Activated naive CD4-positive, alpha-beta T cell treated with anti-CD3 and anti-CD28 coated beads for 36 hours (primary cell): ENCODE measurements at regions of chr2 and their contacts with region 1.

Region 1: GRCh38 chr2:20822535-20823490 is at the start of gene LDAH:
- DNase-seq: peak; percentile 92
- H3K4me3 Mint-ChIP-seq: peak within 1 kb of the TSS; percentile 96
- H3K27ac Mint-ChIP-seq: peak within 1 kb of the TSS; percentile 97
- H3K4me1 Mint-ChIP-seq: peaks cover 26% of the 10 kb centered on the region
- H3K27me3 Mint-ChIP-seq: no peaks in the 10 kb centered on the region
- total RNA-seq, gene LDAH: 31.1 to 37.6 TPM

Region 2: GRCh38 chr2:19623488-19623887 is 1199.3 kb before region 1 on chr2:
- CTCF ChIA-PET with region 1: no interaction called
- intact Hi-C with region 1: no loop called
- DNase-seq: no peak
- H3K4me3 Mint-ChIP-seq: no peak overlapping the region
- H3K27ac Mint-ChIP-seq: no peak overlapping the region
- H3K4me1 Mint-ChIP-seq: no peaks in the 10 kb centered on the region
- H3K27me3 Mint-ChIP-seq: peaks cover 20% of the 10 kb centered on the region

Region 3: GRCh38 chr2:19989681-19990415 is 833.0 kb before region 1 on chr2 and contains the start of gene WDR35:
- CTCF ChIA-PET with region 1: no interaction called
- intact Hi-C with region 1: loop called (anchors 5 kb)
- DNase-seq: peak; percentile 91
- H3K4me3 Mint-ChIP-seq: peak within 1 kb of the TSS; percentile 87
- H3K27ac Mint-ChIP-seq: peak within 1 kb of the TSS; percentile 54
- H3K4me1 Mint-ChIP-seq: peaks cover 28% of the 10 kb centered on the region
- H3K27me3 Mint-ChIP-seq: peaks cover 13% of the 10 kb centered on the region
- total RNA-seq, gene WDR35: 4.3 to 4.4 TPM

Region 4: DNA sequence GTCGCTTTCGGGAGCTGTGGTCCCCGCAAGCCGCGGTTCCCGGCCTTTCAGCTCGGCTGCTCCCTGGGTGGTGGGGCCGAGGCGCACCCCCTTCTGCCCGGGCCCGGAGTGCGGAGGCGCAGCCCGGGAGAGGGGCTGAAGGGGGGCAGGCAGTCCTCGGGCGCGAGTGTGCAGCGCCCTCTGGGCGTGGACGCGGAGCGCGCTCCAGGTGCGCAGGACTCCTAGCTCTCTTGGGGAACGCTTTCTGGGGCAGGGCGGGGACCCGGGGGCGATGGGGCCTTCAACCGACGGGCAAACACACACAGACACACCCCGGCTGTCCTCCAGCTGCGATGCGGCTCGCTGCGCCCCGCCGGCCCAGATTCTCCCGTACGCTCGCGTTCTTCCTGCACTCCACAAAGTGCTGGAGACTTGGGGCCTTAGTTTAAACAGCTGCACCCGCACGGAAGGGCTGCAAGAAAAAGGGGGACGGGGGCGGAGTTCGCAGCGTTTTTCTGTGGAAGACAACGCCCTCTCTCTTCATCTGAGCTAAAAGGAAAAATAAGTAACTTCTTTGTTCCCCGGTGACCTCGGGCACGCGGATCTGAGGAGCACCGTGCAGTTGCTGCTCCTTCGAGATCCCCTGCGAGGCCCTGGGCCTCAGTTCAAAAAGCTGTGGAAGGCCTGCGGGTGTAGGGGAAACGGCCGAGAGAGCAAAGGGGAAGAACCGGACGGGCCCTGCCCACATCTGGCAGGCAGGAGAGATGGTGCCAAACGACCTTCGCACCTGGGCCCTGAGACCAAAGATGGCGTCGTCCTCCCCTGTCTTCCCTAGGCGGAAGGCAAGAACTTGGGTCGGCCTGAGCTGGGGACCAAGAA is 597.3 kb before region 1 on chr2:
- CTCF ChIA-PET with region 1: no interaction called
- intact Hi-C with region 1: no loop called
- DNase-seq: peak; percentile 44
- H3K4me3 Mint-ChIP-seq: peak overlapping the region; percentile 55
- H3K27ac Mint-ChIP-seq: no peak overlapping the region
- H3K4me1 Mint-ChIP-seq: peaks cover 6% of the 10 kb centered on the region
- H3K27me3 Mint-ChIP-seq: peaks cover 41% of the 10 kb centered on the region

Region 5: GRCh38 chr2:20365249-20365817 is 457.5 kb before region 1 on chr2:
- CTCF ChIA-PET with region 1: no interaction called
- intact Hi-C with region 1: loop called (anchors 2 kb)
- DNase-seq: peak; percentile 84
- H3K4me3 Mint-ChIP-seq: no peak overlapping the region
- H3K27ac Mint-ChIP-seq: peak overlapping the region; percentile 54
- H3K4me1 Mint-ChIP-seq: peaks cover 25% of the 10 kb centered on the region
- H3K27me3 Mint-ChIP-seq: peaks cover 11% of the 10 kb centered on the region

Region 6: GRCh38 chr2:20446917-20447436 is 375.8 kb before region 1 on chr2 and contains the start of gene RHOB:
- CTCF ChIA-PET with region 1: no interaction called
- intact Hi-C with region 1: loop called (anchors 5 kb)
- DNase-seq: peak; percentile 91
- H3K4me3 Mint-ChIP-seq: peak within 1 kb of the TSS; percentile 76
- H3K27ac Mint-ChIP-seq: no peak within 1 kb of the TSS
- H3K4me1 Mint-ChIP-seq: peaks cover 11% of the 10 kb centered on the region
- H3K27me3 Mint-ChIP-seq: peaks cover 3% of the 10 kb centered on the region
- total RNA-seq, gene RHOB: 1.8 to 2.0 TPM

Region 7: DNA sequence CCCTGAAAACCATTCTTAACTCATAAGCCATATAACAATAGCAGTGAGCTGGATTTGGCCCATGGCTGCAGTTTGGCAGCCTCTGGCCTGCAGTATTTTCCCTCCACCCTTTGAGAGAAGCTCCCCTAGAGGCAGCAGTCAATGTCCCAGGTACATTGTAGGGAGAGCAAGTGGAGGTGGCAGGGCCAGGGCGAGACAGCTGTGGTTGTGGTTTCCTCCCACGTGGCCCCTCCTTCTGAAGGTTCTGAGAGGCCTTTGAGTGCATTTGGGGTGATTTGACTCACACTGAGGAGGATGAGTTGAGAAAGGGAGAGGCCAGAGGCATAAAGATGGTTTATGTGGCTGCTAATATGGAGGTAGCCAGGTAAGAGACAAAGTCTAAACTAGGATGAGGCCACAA is 45.6 kb after region 1 on chr2:
- CTCF ChIA-PET with region 1: no interaction called
- intact Hi-C with region 1: loop called (anchors 1 kb)
- DNase-seq: peak; percentile 79
- H3K4me3 Mint-ChIP-seq: no peak overlapping the region
- H3K27ac Mint-ChIP-seq: no peak overlapping the region
- H3K4me1 Mint-ChIP-seq: peaks cover 7% of the 10 kb centered on the region
- H3K27me3 Mint-ChIP-seq: peaks cover 27% of the 10 kb centered on the region